Sciatic nerve (tissue), 2 donors: ENCODE measurements at regions of chr10 and their contacts with region 1.

Region 1: GRCh38 chr10:88932539-88933256 is 19.9 kb downstream of the ACTA2 start:
- DNase-seq: no peak
- ATAC-seq: peak; percentile 78

Region 2: GRCh38 chr10:88012641-88013040 is 920.1 kb before region 1 on chr10:
- intact Hi-C with region 1: no loop called
- DNase-seq: no peak
- ATAC-seq: no peak

Region 3: DNA sequence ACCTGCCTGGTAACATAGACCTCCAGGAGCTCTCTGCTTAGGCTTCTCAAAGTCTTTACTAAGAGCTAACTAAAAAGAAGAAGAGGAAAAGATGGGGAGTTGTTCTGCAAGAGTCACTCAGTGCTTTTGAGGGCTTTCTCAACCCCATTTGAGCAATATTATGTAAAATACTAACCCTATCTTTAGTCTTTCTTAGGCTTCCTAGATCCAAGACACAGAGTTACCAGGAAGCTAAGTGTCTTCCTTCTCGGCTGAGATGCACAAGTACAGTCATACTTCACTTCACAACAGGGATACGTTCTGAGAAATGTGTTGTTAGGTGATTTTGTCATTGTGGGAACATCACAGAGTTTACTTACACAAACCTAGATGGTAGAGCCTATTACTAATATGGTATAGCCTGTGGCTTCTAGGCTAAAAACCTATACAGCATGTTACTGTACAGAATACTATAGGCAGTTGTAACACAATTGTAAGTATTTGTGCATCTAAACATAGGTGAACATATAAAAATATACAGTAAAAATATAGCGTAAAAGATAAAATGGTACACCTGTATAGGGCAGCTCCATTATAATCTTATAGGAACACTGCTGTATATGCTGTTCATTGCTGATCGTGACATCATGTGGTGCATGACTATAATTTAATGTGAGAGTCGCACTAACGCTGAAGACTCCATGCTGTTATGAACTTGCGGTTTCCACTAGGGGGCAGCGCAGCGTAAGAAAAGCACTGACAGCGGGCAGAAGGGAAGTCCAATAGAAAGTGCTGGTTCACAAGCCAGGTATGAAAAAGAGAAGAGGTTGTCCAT is 97.4 kb before region 1 on chr10:
- intact Hi-C with region 1: loop called (anchors 5 kb)
- DNase-seq: peak; percentile 93
- ATAC-seq: peak; percentile 94

Region 4: DNA sequence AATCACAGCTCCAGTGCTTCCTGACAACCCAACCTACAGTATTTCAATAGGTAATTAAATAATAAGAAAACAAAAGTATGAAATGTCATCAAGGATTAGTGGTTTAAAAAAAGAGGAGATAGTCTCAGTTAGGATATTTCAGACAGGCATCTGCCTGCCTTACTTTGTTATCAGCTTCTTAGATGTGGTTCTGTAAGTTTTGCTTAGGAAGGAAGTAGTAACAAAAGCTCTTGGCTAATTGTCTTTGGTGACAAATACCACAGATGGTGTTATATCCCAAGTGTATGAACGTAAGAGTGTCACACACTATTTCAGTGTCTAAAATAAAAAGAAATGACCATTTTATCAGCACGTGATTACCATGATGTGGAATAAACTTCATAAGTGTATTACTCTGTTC is 29.6 kb after region 1 on chr10:
- intact Hi-C with region 1: no loop called
- DNase-seq: no peak
- ATAC-seq: no peak

Region 5: GRCh38 chr10:88986549-88987242 is 54.0 kb after region 1 on chr10:
- intact Hi-C with region 1: loop called (anchors 10 kb)
- DNase-seq: no peak
- ATAC-seq: no peak

Region 6: GRCh38 chr10:89217057-89217990 is 284.6 kb after region 1 on chr10:
- intact Hi-C with region 1: loop called (anchors 10 kb)
- DNase-seq: peak; percentile 80
- ATAC-seq: peak; percentile 54